ENCODE measurements at regions of chr19 and their contacts with region 1.

Region 1: GRCh38 chr19:27966390-27966816 is 1246.5 kb downstream of the UQCRFS1 start:
- DNase-seq: no peak
- H3K4me3 ChIP-seq: no peak overlapping the region
- H3K27ac ChIP-seq: no peak overlapping the region
- H3K4me1 ChIP-seq: no peaks in the 10 kb centered on the region
- H3K27me3 ChIP-seq: no peaks in the 10 kb centered on the region
- CTCF ChIP-seq: peak in 8 of 11 experiments; percentile 21 to 60 (median 49)
- POLR2A ChIP-seq: no peak

Region 2: GRCh38 chr19:28051047-28051446 is 84.6 kb after region 1 on chr19:
- intact Hi-C with region 1: no loop called
- DNase-seq: no peak
- H3K4me3 ChIP-seq: no peak overlapping the region
- H3K27ac ChIP-seq: no peak overlapping the region
- H3K4me1 ChIP-seq: no peaks in the 10 kb centered on the region
- H3K27me3 ChIP-seq: no peaks in the 10 kb centered on the region
- CTCF ChIP-seq: no peak
- POLR2A ChIP-seq: no peak

Region 3: DNA sequence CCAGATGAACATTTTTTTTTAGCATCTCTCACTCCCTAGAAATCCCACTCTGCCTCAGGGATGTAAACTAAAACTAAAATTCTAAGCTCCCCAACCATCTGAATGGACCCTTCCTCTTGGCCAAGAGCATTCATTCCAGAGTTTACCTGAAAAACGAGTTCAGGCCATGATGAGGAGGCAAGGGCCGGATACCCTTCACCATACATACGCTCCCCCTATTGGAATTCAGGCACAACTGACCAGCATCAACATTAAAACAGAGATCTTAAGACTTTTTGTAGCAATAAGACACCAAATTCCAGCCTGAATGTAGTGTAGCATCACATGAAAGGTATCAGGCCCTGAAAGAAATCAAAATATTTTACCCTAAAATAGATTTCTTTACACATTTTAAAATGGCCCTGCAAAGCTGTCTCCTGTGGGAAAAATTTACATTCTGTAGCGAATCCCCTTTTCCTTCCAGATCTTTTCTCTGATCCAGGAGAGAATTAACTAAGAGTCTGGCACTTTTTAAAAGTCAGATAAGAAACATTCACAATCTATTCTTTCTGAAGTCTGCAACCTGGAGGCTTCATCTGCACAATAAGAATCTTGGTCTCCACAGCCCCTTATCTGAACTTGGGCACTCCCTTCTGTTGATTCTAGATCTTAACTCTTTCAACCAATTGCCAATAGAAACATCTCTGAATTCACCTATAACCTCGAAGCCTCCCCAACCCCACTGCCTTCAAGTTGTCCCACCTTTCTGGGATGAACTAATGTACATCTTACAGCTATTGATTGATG is 358.1 kb after region 1 on chr19:
- intact Hi-C with region 1: loop called (anchors 10 kb)
- DNase-seq: no peak
- H3K4me3 ChIP-seq: no peak overlapping the region
- H3K27ac ChIP-seq: no peak overlapping the region
- H3K4me1 ChIP-seq: peaks cover 0 to 4% (median 0%) of the 10 kb centered on the region in 6 donors
- H3K27me3 ChIP-seq: no peaks in the 10 kb centered on the region
- CTCF ChIP-seq: no peak
- POLR2A ChIP-seq: no peak

Region 4: DNA sequence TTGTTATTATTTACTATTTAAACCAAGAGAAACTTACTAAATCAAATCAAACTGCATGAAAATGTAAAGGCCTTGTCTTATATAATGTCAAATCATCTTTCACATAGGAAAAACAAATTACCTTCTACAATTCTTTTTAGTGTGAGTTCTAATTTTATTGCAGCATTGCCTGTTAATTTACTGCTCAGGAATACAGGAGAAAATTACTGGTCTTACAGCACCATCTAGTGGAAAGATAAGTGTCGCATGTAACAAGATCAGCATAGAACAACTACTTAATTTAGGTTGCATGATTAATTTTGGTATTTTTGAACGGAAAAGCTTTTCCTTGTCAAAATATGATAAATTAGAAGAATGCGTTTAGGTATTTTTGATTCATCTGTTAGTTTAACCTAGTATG is 743.9 kb after region 1 on chr19:
- intact Hi-C with region 1: loop called (anchors 5 kb)
- DNase-seq: no peak
- H3K4me3 ChIP-seq: no peak overlapping the region
- H3K27ac ChIP-seq: no peak overlapping the region
- H3K4me1 ChIP-seq: no peaks in the 10 kb centered on the region
- H3K27me3 ChIP-seq: no peaks in the 10 kb centered on the region
- CTCF ChIP-seq: peak; percentile 31 to 76 (median 63)
- POLR2A ChIP-seq: no peak

Measured in spleen (tissue), 13 donors.